ENCODE measurements at regions of chr1 and their contacts with region 1.

Region 1: GRCh38 chr1:62746085-62746808 is 37.7 kb upstream of the ATG4C start:
- DNase-seq: peak in 4 of 5 donors; percentile 32 to 40 (median 38)
- H3K4me3 ChIP-seq: no peak overlapping the region
- H3K4me3 Mint-ChIP-seq: no peak overlapping the region
- H3K27ac ChIP-seq: no peak overlapping the region
- H3K27ac Mint-ChIP-seq: no peak overlapping the region
- H3K4me1 ChIP-seq: no peaks in the 10 kb centered on the region
- H3K4me1 Mint-ChIP-seq: peaks cover 0 to 1% (median 0%) of the 10 kb centered on the region in 4 donors
- H3K27me3 ChIP-seq: no peaks in the 10 kb centered on the region
- H3K27me3 Mint-ChIP-seq: peaks cover 4 to 9% of the 10 kb centered on the region in 2 donors

Region 2: GRCh38 chr1:62082456-62083363 is 663.5 kb before region 1 on chr1:
- CTCF ChIA-PET with region 1: interaction called, 14 read pairs
- POLR2A ChIA-PET with region 1: no interaction called
- intact Hi-C with region 1: no loop called
- DNase-seq: peak in 4 of 5 donors; percentile 17 to 29 (median 22)
- H3K4me3 ChIP-seq: no peak overlapping the region
- H3K4me3 Mint-ChIP-seq: no peak overlapping the region
- H3K27ac ChIP-seq: no peak overlapping the region
- H3K27ac Mint-ChIP-seq: no peak overlapping the region
- H3K4me1 ChIP-seq: no peaks in the 10 kb centered on the region
- H3K4me1 Mint-ChIP-seq: peaks cover 0 to 2% (median 0%) of the 10 kb centered on the region in 4 donors
- H3K27me3 ChIP-seq: no peaks in the 10 kb centered on the region
- H3K27me3 Mint-ChIP-seq: no peaks in the 10 kb centered on the region

Region 3: DNA sequence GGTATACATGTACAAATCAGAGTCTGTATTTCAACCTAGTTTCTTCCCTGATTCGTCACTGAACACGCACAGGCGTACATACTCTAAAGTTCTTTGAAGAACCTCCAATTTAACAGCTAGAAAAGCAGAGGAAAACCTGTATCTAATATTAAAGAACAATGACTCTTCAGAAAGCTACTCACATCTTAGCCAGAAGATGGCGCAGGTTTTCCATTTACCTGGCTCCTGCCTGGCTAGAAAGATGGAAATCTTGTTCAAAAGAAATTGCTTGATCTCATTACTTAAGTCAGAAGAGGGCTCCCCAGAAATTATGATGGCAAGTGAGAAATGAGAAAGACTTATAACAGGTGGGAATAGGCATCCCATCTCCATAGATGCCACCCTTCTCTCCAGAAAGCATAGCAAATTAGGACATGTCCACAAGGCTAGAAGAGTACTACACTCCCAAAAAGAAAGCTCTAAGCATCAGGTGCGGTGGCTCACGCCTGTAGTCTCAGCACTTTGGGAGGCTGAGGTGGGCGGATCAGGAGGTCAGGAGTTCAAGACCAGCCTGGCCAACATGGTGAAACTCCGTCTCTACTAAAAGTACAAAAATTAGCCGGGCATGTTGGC is 570.6 kb before region 1 on chr1:
- CTCF ChIA-PET with region 1: interaction called, 45 read pairs
- POLR2A ChIA-PET with region 1: interaction called, 3 read pairs
- intact Hi-C with region 1: no loop called
- DNase-seq: peak in 4 of 5 donors; percentile 26 to 51 (median 34)
- H3K4me3 ChIP-seq: no peak overlapping the region
- H3K4me3 Mint-ChIP-seq: no peak overlapping the region
- H3K27ac ChIP-seq: no peak overlapping the region
- H3K27ac Mint-ChIP-seq: no peak overlapping the region
- H3K4me1 ChIP-seq: no peaks in the 10 kb centered on the region
- H3K4me1 Mint-ChIP-seq: no peaks in the 10 kb centered on the region
- H3K27me3 ChIP-seq: no peaks in the 10 kb centered on the region
- H3K27me3 Mint-ChIP-seq: peaks cover 5 to 8% of the 10 kb centered on the region in 2 donors

Region 4: GRCh38 chr1:62407405-62408009 is 338.7 kb before region 1 on chr1:
- CTCF ChIA-PET with region 1: interaction called, 3 read pairs
- POLR2A ChIA-PET with region 1: no interaction called
- intact Hi-C with region 1: loop called (anchors 10 kb)
- DNase-seq: peak in 4 of 5 donors; percentile 37 to 47 (median 42)
- H3K4me3 ChIP-seq: no peak overlapping the region
- H3K4me3 Mint-ChIP-seq: no peak overlapping the region
- H3K27ac ChIP-seq: no peak overlapping the region
- H3K27ac Mint-ChIP-seq: peak overlapping the region in 1 of 7 donors; percentile 41
- H3K4me1 ChIP-seq: no peaks in the 10 kb centered on the region
- H3K4me1 Mint-ChIP-seq: no peaks in the 10 kb centered on the region
- H3K27me3 ChIP-seq: no peaks in the 10 kb centered on the region
- H3K27me3 Mint-ChIP-seq: no peaks in the 10 kb centered on the region

Region 5: DNA sequence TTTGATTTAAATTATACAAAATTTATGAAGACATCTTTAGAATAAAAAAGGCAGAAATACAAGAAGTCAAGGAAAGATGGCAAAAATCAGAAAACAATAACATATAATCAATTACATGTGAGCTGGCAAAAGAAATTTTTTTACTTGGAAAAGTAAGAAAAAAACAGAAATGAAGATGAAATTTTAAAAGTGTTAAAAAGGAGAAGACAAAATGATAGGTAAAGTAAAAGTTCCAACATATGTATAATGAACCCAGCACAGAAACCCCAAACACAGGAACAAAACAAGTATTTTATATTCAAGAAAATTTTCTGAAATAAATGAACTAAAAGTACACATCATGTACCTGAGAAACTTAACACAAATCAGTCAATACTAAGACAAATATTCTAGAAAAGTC is 246.0 kb before region 1 on chr1:
- CTCF ChIA-PET with region 1: interaction called, 100 read pairs
- POLR2A ChIA-PET with region 1: no interaction called
- intact Hi-C with region 1: no loop called
- DNase-seq: no peak
- H3K4me3 ChIP-seq: no peak overlapping the region
- H3K4me3 Mint-ChIP-seq: no peak overlapping the region
- H3K27ac ChIP-seq: no peak overlapping the region
- H3K27ac Mint-ChIP-seq: no peak overlapping the region
- H3K4me1 ChIP-seq: no peaks in the 10 kb centered on the region
- H3K4me1 Mint-ChIP-seq: no peaks in the 10 kb centered on the region
- H3K27me3 ChIP-seq: no peaks in the 10 kb centered on the region
- H3K27me3 Mint-ChIP-seq: no peaks in the 10 kb centered on the region

Region 6: GRCh38 chr1:62508187-62508758 is 238.0 kb before region 1 on chr1:
- CTCF ChIA-PET with region 1: interaction called, 100 read pairs
- POLR2A ChIA-PET with region 1: no interaction called
- intact Hi-C with region 1: no loop called
- DNase-seq: peak in 4 of 5 donors; percentile 7 to 35 (median 16)
- H3K4me3 ChIP-seq: no peak overlapping the region
- H3K4me3 Mint-ChIP-seq: no peak overlapping the region
- H3K27ac ChIP-seq: no peak overlapping the region
- H3K27ac Mint-ChIP-seq: no peak overlapping the region
- H3K4me1 ChIP-seq: no peaks in the 10 kb centered on the region
- H3K4me1 Mint-ChIP-seq: no peaks in the 10 kb centered on the region
- H3K27me3 ChIP-seq: no peaks in the 10 kb centered on the region
- H3K27me3 Mint-ChIP-seq: no peaks in the 10 kb centered on the region

Region 7: DNA sequence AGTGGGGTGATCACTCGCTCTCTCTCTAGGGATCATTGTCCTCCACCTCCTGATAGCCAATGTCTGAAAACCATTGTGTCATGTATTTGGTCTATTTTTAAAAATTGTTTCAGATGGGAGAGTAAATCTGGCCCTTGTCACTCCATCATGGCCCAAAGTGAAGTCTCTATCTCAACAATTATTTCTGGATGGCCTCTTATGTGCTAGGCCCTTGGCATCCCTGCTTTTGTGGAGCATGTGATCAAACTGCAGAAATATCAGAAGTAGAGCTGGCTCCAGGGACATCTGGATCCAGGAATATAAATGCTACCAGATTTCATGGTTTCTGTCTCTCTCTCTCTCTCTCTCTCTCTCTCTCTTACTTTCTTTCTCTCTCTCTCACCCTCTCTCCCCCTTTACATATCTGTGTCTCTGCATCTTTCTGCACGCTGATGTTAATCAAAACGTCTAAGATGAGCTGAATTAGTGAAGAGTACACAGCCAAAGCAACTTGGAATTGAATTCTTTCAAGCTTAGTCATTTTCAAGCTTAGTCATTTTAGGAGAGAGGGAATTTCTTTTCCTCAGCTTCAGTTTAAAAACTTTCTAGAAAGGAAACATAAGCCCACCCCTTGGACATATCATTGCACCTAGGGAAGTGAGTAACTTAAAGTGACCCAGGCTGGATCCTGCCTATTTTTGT is 10.6 kb before region 1 on chr1:
- CTCF ChIA-PET with region 1: interaction called, 11 read pairs
- POLR2A ChIA-PET with region 1: no interaction called
- intact Hi-C with region 1: no loop called
- DNase-seq: no peak
- H3K4me3 ChIP-seq: no peak overlapping the region
- H3K4me3 Mint-ChIP-seq: no peak overlapping the region
- H3K27ac ChIP-seq: no peak overlapping the region
- H3K27ac Mint-ChIP-seq: no peak overlapping the region
- H3K4me1 ChIP-seq: no peaks in the 10 kb centered on the region
- H3K4me1 Mint-ChIP-seq: no peaks in the 10 kb centered on the region
- H3K27me3 ChIP-seq: no peaks in the 10 kb centered on the region
- H3K27me3 Mint-ChIP-seq: peaks cover 5 to 11% of the 10 kb centered on the region in 2 donors

Region 8: DNA sequence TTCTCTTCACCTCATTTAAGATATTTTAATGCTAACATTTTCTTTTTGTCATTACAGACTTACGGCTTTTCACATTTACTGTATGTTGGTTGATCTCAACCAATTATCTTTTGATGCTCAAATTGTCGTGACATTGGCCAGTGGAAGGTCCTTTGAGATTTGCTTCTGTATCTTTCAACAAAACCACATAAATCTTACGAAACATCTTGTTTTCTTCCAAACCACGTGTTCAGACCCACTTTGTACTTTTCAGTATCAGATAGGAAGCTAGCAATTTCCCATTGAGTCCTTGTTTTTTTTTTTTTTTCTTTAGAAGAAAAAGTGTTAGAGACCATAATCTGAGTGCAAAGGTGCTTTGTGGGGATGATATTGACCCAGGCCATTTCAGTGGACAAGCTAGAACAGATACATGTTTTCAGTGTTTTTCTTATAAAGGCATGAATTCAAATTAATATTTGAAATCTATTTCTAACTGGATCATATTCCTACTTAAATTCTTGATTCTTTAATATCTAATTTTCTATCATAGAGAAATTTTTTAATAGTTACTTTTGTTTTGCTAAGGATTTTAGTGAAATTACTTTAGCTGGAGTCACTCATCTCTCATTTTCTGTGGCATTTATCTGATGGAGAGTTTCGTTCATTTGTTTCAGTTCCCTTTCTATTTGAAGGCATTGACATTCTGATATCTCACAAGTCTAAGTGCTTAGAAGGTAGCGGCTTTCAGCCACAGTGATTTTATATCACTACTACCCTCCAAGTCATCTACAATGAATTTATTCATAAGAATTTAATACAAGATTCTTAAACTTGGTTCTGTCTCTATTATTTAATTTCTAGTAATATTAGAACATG is 64.4 kb after region 1 on chr1:
- CTCF ChIA-PET with region 1: no interaction called
- POLR2A ChIA-PET with region 1: no interaction called
- intact Hi-C with region 1: no loop called
- DNase-seq: no peak
- H3K4me3 ChIP-seq: no peak overlapping the region
- H3K4me3 Mint-ChIP-seq: no peak overlapping the region
- H3K27ac ChIP-seq: no peak overlapping the region
- H3K27ac Mint-ChIP-seq: no peak overlapping the region
- H3K4me1 ChIP-seq: no peaks in the 10 kb centered on the region
- H3K4me1 Mint-ChIP-seq: no peaks in the 10 kb centered on the region
- H3K27me3 ChIP-seq: no peaks in the 10 kb centered on the region
- H3K27me3 Mint-ChIP-seq: no peaks in the 10 kb centered on the region

Region 9: GRCh38 chr1:62841587-62842169 is 95.4 kb after region 1 on chr1:
- CTCF ChIA-PET with region 1: no interaction called
- POLR2A ChIA-PET with region 1: no interaction called
- intact Hi-C with region 1: no loop called
- DNase-seq: peak in 4 of 5 donors; percentile 32 to 48 (median 44)
- H3K4me3 ChIP-seq: no peak overlapping the region
- H3K4me3 Mint-ChIP-seq: no peak overlapping the region
- H3K27ac ChIP-seq: no peak overlapping the region
- H3K27ac Mint-ChIP-seq: no peak overlapping the region
- H3K4me1 ChIP-seq: no peaks in the 10 kb centered on the region
- H3K4me1 Mint-ChIP-seq: peaks cover 0 to 1% (median 0%) of the 10 kb centered on the region in 4 donors
- H3K27me3 ChIP-seq: no peaks in the 10 kb centered on the region
- H3K27me3 Mint-ChIP-seq: no peaks in the 10 kb centered on the region

Measured in CD4-positive, alpha-beta memory T cell (primary cell).